K562 (cell line): ENCODE measurements at regions of chr16 and their contacts with region 1.

Region 1: DNA sequence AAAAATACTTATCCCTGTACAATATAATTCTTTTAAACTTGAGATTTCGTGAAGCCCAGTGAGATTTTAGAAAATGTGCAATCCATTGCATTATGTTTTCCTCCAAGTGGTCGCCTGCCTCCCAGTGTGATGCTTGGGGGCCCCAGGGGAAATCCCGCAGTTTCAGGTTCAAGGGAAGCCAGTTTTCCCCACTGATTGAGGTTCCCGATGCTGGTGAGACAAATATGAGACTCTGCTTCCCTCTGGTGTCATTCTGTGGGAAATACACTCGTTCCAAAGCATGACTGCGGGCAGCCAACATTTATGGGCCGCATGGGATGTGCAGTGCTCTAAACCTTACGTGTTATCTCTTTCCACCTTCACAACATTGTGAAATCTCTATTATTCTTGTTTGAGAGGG is 200.8 kb downstream of the PRKCB start:
- DNase-seq: peak; percentile 37 to 57 (median 41)
- ATAC-seq: peak; percentile 68
- H3K4me3 ChIP-seq: no peak overlapping the region
- H3K27ac ChIP-seq: no peak overlapping the region
- H3K4me1 ChIP-seq: peaks cover 0 to 3% of the 10 kb centered on the region in 2 experiments; a peak in 2 of 5 replicates
- H3K27me3 ChIP-seq: no peaks in the 10 kb centered on the region; a peak in 1 of 5 replicates
- CTCF ChIP-seq: peak; percentile 52 to 63 (median 58)
- EP300 ChIP-seq: no peak
- POLR2A ChIP-seq: no peak
- RAD21 ChIP-seq: peak; percentile 62 to 75

Region 2: DNA sequence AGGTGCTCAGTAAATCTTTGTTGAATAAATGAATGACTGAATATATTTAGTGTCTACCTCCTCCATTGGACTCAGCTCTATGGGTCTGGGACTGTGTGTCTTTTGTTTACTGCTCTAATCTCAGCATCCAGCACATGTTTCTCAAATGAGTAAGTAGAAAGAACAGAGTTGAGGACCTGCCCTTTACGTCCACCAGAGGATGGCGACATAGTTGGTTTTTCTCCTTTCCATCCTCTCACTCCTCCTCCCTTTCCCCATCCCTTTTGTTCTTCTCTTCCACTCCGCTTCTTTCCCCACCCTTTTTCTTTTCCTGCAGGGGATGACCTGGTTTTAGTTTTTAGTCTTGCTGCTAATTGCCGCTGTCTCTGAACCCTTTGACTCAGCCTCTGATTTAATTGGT is 293.8 kb before region 1 on chr16:
- CTCF ChIA-PET with region 1: no interaction called
- POLR2A ChIA-PET with region 1: no interaction called
- in situ Hi-C with region 1: loop called (anchors 10 kb)
- intact Hi-C with region 1: loop called (anchors 2 kb)
- DNase-seq: peak in 2 of 4 experiments; percentile 24 to 36
- ATAC-seq: peak; percentile 61; the same call in 2 of the 3 replicates
- H3K4me3 ChIP-seq: no peak overlapping the region
- H3K27ac ChIP-seq: no peak overlapping the region
- H3K4me1 ChIP-seq: no peaks in the 10 kb centered on the region
- H3K27me3 ChIP-seq: peaks cover 6 to 9% of the 10 kb centered on the region in 2 experiments; a peak in 2 of 5 replicates
- CTCF ChIP-seq: peak; percentile 17 to 40 (median 30); a peak in 3 of 6 replicates
- EP300 ChIP-seq: no peak
- POLR2A ChIP-seq: no peak
- RAD21 ChIP-seq: peak in 1 of 2 experiments; percentile 47; a peak in 2 of 4 replicates